ENCODE measurements at regions of chr7 and their contacts with region 1.

Region 1: GRCh38 chr7:75866489-75867389 is 12.1 kb upstream of the RHBDD2 start:
- DNase-seq: peak; percentile 69
- ATAC-seq: peak; percentile 74
- H3K4me3 Mint-ChIP-seq: no peak overlapping the region
- H3K27ac Mint-ChIP-seq: no peak overlapping the region
- H3K4me1 Mint-ChIP-seq: peaks cover 24% of the 10 kb centered on the region
- H3K27me3 Mint-ChIP-seq: peaks cover 8% of the 10 kb centered on the region

Region 2: GRCh38 chr7:75854233-75854632 is 12.5 kb before region 1 on chr7:
- CTCF ChIA-PET with region 1: no interaction called
- POLR2A ChIA-PET with region 1: no interaction called
- intact Hi-C with region 1: no loop called
- DNase-seq: no peak
- ATAC-seq: no peak
- H3K4me3 Mint-ChIP-seq: no peak overlapping the region
- H3K27ac Mint-ChIP-seq: no peak overlapping the region
- H3K4me1 Mint-ChIP-seq: peaks cover 7% of the 10 kb centered on the region
- H3K27me3 Mint-ChIP-seq: peaks cover 2% of the 10 kb centered on the region

Region 3: GRCh38 chr7:76133164-76133775 is 266.5 kb after region 1 on chr7:
- CTCF ChIA-PET with region 1: no interaction called
- POLR2A ChIA-PET with region 1: no interaction called
- intact Hi-C with region 1: loop called in 1 of 2 experiments (anchors 10 kb)
- DNase-seq: no peak
- ATAC-seq: peak; percentile 62
- H3K4me3 Mint-ChIP-seq: peak overlapping the region; percentile 33
- H3K27ac Mint-ChIP-seq: peak overlapping the region; percentile 64
- H3K4me1 Mint-ChIP-seq: peaks cover 34% of the 10 kb centered on the region
- H3K27me3 Mint-ChIP-seq: no peaks in the 10 kb centered on the region